ENCODE measurements at regions of chr2 and their contacts with region 1.

Region 1: GRCh38 chr2:233012301-233012971 is 620 bp downstream of the NGEF start:
- DNase-seq: peak; percentile 72 to 81 (median 74)
- ATAC-seq: peak; percentile 91
- H3K4me3 ChIP-seq: no peak overlapping the region
- H3K4me1 ChIP-seq: peaks cover 11% of the 10 kb centered on the region
- CTCF ChIP-seq: no peak

Region 2: GRCh38 chr2:232744963-232745362 is 267.5 kb before region 1 on chr2:
- intact Hi-C with region 1: loop called in 1 of 2 experiments (anchors 10 kb)
- DNase-seq: no peak
- ATAC-seq: peak; percentile 87
- H3K4me3 ChIP-seq: no peak overlapping the region
- H3K4me1 ChIP-seq: no peaks in the 10 kb centered on the region
- CTCF ChIP-seq: no peak

Region 3: DNA sequence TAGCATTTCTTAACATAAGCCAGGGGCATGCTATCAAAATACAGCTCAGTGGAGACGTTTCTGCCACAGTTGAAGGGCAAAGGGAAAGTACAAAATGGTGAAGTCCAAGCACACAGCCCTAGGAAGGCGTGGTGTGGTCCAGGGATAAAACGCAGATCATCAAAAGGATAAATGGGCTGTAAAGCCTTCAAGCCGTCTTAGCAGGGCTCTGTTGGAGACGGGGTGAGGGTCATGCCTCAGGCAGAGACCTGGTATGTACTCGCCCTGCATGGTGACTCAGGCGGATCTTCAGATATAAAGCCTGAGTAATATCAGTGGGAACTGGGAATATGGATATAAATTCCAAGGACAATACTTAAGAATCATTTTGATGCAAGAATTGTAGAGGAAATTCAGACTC is 60.5 kb before region 1 on chr2:
- intact Hi-C with region 1: no loop called
- DNase-seq: no peak
- ATAC-seq: no peak
- H3K4me3 ChIP-seq: no peak overlapping the region
- H3K4me1 ChIP-seq: no peaks in the 10 kb centered on the region
- CTCF ChIP-seq: no peak

Region 4: GRCh38 chr2:233470011-233470687 is 457.7 kb after region 1 on chr2:
- intact Hi-C with region 1: no loop called
- DNase-seq: peak in 2 of 3 donors; percentile 37 to 54
- ATAC-seq: peak; percentile 52
- H3K4me3 ChIP-seq: no peak overlapping the region
- H3K4me1 ChIP-seq: no peaks in the 10 kb centered on the region
- CTCF ChIP-seq: no peak